Mammary epithelial cell (primary cell): ENCODE measurements at regions of chr3 and their contacts with region 1.

Region 1: DNA sequence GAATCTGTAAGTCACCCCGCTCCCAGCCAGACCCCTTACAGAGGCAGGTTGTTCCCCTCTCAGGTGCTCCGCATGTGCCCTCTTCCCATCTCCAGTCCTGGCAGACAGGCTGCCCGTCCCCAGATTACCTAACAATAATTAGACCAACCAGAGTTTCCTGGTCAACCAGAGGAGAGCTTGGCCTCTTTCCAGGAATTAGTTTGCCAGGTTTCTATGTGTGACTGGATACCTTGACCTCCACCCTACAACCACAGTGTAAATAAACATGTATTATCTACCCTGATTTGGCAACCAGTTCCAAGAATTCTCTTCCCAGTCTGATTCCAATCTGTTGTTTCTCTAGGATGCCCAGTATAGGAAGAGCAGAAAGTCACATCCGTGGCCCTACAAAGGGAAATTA is 178.0 kb upstream of the UMPS start:
- DNase-seq: peak; percentile 37
- H3K4me3 ChIP-seq: no peak overlapping the region
- H3K27ac ChIP-seq: no peak overlapping the region
- H3K4me1 ChIP-seq: peaks cover 3% of the 10 kb centered on the region
- H3K27me3 ChIP-seq: no peaks in the 10 kb centered on the region
- CTCF ChIP-seq: no peak

Region 2: DNA sequence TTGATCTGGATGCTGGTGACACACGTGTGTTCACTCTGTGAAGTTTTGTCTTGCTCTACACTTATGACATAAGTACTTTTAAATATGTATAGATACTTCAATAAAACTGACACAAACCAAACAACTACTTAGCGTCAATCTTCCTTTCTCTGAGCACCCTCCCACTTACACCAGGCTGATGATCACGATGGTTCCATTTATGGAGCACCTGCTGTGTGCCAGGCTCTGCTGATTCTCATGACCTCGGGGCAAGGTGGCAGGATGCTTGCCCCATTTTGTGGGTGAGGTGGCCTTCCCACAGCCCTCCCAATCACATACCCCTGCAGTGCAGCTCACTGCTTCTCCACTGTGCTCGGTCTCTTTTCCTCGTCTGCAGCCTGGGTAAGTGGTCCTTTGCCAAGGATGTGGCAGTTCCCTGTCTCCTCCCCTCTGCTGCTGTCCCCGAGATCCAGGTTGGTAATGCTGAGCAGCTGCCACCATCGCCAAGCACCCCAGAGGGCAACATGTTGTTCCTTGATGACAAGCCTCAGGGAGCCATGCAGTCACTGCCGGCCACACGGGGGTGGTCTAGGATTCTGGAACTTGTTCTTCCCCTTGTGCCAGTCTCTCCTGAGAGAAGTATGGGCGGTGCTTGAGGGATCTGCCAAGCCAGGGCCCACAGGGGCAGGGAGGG is 1082.8 kb before region 1 on chr3:
- CTCF ChIA-PET with region 1: no interaction called
- dilution Hi-C with region 1: no loop called
- in situ Hi-C with region 1: no loop called
- intact Hi-C with region 1: no loop called
- DNase-seq: no peak
- H3K4me3 ChIP-seq: no peak overlapping the region
- H3K27ac ChIP-seq: no peak overlapping the region
- H3K4me1 ChIP-seq: no peaks in the 10 kb centered on the region
- H3K27me3 ChIP-seq: no peaks in the 10 kb centered on the region
- CTCF ChIP-seq: no peak

Region 3: DNA sequence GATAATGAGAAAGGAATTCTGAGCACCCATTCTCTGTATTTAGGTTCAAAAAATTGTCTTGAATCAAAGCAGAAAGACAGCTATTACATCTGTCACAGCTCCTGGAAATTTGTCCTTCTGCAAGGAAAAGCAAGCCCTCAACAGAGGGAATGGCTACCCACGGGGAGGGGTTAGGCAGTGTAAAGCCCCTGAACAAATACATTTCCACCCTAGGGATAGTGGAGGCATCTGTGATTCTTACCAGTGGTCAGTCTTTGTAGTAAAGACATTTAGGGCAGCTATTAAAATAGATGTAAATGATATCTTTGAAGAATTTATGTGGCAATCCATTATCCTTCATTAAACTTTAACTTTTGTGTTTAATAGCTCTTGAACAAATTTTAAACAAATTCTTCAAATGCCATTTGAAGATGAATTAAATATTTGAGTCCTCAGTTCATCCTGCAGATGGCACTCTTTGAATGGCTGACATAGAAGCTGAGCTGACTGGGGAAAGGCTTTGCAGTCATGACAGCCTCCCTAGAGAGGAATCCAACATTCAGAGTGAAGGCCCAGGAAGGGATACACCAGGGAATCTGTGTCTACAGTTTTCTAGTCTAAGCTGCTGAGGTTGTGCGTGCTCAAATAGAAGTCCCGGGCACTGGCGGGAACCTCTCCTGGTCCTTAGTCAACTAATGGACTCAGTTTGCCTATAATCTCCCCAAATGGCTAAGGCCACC is 200.7 kb before region 1 on chr3:
- CTCF ChIA-PET with region 1: interaction called, 5 read pairs
- dilution Hi-C with region 1: no loop called
- in situ Hi-C with region 1: loop called in 1 of 2 experiments (anchors 5 kb)
- intact Hi-C with region 1: loop called (anchors 1 kb)
- DNase-seq: peak; percentile 28
- H3K4me3 ChIP-seq: no peak overlapping the region
- H3K27ac ChIP-seq: no peak overlapping the region
- H3K4me1 ChIP-seq: no peaks in the 10 kb centered on the region
- H3K27me3 ChIP-seq: peaks cover 2% of the 10 kb centered on the region
- CTCF ChIP-seq: peak; percentile 37 to 70

Region 4: DNA sequence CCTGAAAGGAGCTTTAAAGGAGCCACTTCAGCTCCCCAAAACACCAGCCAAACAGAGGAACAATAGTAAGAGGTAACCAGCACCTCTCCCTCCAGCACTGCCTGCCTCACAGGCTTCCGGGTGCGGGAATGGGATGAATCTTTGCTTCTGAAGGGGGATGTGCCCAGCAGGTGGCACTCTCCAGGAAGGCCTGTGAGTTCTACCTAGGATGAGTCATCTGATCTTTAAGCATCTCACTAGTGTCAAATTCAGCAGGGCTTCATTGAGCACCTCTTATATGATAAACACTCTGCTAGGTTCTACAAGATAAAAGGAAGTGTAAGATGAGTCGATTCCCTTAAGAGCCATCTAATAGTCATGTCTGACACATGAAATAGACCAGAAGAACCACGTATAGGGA is 59.4 kb before region 1 on chr3:
- CTCF ChIA-PET with region 1: no interaction called
- dilution Hi-C with region 1: no loop called
- in situ Hi-C with region 1: loop called (anchors 5 kb)
- intact Hi-C with region 1: loop called (anchors 1 kb)
- DNase-seq: peak; percentile 68
- H3K4me3 ChIP-seq: no peak overlapping the region
- H3K27ac ChIP-seq: no peak overlapping the region
- H3K4me1 ChIP-seq: peaks cover 10% of the 10 kb centered on the region
- H3K27me3 ChIP-seq: no peaks in the 10 kb centered on the region
- CTCF ChIP-seq: peak; percentile 75 to 86